Psoas muscle (tissue), 8 donors: ENCODE measurements at regions of chr3 and their contacts with region 1.

Region 1: GRCh38 chr3:172710664-172711453 is at the start of gene NCEH1:
- DNase-seq: peak; percentile 89 to 93
- ATAC-seq: peak; percentile 99 to 100 (median 99)
- H3K4me3 ChIP-seq: peak within 1 kb of the TSS; percentile 97
- H3K27ac ChIP-seq: peak within 1 kb of the TSS; percentile 87
- H3K4me1 ChIP-seq: peaks cover 6% of the 10 kb centered on the region
- H3K27me3 ChIP-seq: no peaks in the 10 kb centered on the region
- CTCF ChIP-seq: peak; percentile 92
- total RNA-seq, gene NCEH1: 4.0 to 12.0 (median 7.3) TPM

Region 2: GRCh38 chr3:171846597-171846996 is 864.3 kb before region 1 on chr3:
- intact Hi-C with region 1: no loop called
- DNase-seq: no peak
- ATAC-seq: no peak
- H3K4me3 ChIP-seq: no peak overlapping the region
- H3K27ac ChIP-seq: no peak overlapping the region
- H3K4me1 ChIP-seq: no peaks in the 10 kb centered on the region
- H3K27me3 ChIP-seq: no peaks in the 10 kb centered on the region
- CTCF ChIP-seq: no peak

Region 3: DNA sequence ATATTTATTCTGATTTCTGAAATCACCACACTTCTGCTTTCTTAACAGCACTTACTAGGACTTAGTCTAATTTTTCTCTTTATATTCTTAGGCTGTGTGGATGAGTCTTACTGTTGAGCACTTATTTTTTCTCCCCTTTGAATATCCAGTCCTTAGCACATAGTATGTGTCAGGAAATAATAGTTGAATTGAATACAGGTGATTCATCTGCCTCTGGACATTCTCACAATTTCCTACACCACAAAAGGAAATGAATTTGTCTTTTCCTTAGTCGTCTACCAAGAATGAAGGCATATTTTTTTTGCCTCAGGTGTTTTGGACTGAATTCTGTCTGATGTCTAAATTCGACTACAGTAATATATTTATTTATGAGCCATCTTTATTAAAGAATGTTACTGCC is 466.8 kb before region 1 on chr3:
- intact Hi-C with region 1: no loop called
- DNase-seq: no peak
- ATAC-seq: peak in 1 of 4 donors; percentile 53
- H3K4me3 ChIP-seq: no peak overlapping the region
- H3K27ac ChIP-seq: no peak overlapping the region
- H3K4me1 ChIP-seq: peaks cover 21% of the 10 kb centered on the region
- H3K27me3 ChIP-seq: no peaks in the 10 kb centered on the region
- CTCF ChIP-seq: no peak

Region 4: GRCh38 chr3:172673210-172673679 is 37.6 kb before region 1 on chr3:
- intact Hi-C with region 1: loop called (anchors 5 kb)
- DNase-seq: peak; percentile 62 to 74
- ATAC-seq: peak; percentile 70 to 93 (median 82)
- H3K4me3 ChIP-seq: no peak overlapping the region
- H3K27ac ChIP-seq: no peak overlapping the region
- H3K4me1 ChIP-seq: peaks cover 17% of the 10 kb centered on the region
- H3K27me3 ChIP-seq: no peaks in the 10 kb centered on the region
- CTCF ChIP-seq: peak; percentile 63

Region 5: GRCh38 chr3:172750368-172751174 is 39.7 kb after region 1 on chr3 and contains the start of gene ECT2:
- intact Hi-C with region 1: loop called in 1 of 2 experiments (anchors 2 kb)
- DNase-seq: peak; percentile 98 to 99
- ATAC-seq: peak; percentile 100
- H3K4me3 ChIP-seq: peak within 1 kb of the TSS; percentile 78
- H3K27ac ChIP-seq: peak within 1 kb of the TSS; percentile 66
- H3K4me1 ChIP-seq: peaks cover 5% of the 10 kb centered on the region
- H3K27me3 ChIP-seq: no peaks in the 10 kb centered on the region
- CTCF ChIP-seq: peak; percentile 74
- total RNA-seq, gene ECT2: 2.0 to 4.5 (median 2.5) TPM